ENCODE measurements at regions of chr17 and their contacts with region 1.

Region 1: DNA sequence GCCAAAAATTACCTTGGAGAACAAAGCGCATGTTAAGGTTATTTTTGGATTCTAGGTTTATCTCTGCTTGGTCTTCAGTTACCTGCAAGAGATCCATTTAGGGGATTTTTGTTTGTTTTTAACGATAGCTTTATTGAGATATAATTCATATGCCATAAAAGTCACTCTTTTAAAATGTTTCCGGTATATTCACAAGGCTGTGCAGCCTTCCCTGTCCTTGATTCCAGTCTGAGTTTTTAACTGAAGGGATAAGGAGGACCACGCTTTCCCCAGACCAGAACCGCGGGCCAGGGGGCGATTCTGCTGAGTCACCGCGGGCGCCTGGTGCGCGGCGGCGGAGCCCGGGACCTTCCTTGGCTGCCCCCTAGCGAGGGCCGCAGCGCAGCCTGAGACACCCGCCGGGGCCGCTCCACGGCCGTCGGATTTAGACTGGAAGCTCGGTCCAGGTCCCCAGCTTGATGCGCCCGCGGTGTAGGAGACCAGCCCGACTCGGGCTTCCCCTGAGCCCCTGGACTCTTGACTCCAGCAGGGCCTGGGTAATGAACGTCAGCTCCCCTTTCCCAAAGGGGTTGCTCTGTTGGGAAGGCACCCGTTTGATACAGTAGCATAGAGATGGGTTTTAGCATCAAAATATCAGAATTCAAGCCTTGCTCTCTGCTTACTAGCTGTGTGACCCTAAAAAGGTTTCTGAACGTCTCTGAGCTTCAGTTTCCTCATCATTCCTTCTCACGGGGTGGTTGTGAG is 50.0 kb upstream of the STH start:
- DNase-seq: peak; percentile 79
- H3K4me3 Mint-ChIP-seq: peak overlapping the region; percentile 64
- H3K27ac Mint-ChIP-seq: no peak overlapping the region
- H3K4me1 Mint-ChIP-seq: peaks cover 11% of the 10 kb centered on the region
- H3K27me3 Mint-ChIP-seq: peaks cover 14% of the 10 kb centered on the region

Region 2: GRCh38 chr17:45852535-45853297 is 96.3 kb before region 1 on chr17:
- CTCF ChIA-PET with region 1: interaction called, 15 read pairs
- POLR2A ChIA-PET with region 1: no interaction called
- intact Hi-C with region 1: no loop called
- DNase-seq: peak; percentile 65
- H3K4me3 Mint-ChIP-seq: no peak overlapping the region
- H3K27ac Mint-ChIP-seq: no peak overlapping the region
- H3K4me1 Mint-ChIP-seq: no peaks in the 10 kb centered on the region
- H3K27me3 Mint-ChIP-seq: peaks cover 18% of the 10 kb centered on the region

Region 3: GRCh38 chr17:46020023-46020761 is 71.1 kb after region 1 on chr17:
- CTCF ChIA-PET with region 1: no interaction called
- POLR2A ChIA-PET with region 1: no interaction called
- intact Hi-C with region 1: no loop called
- DNase-seq: peak; percentile 72
- H3K4me3 Mint-ChIP-seq: peak overlapping the region; percentile 13
- H3K27ac Mint-ChIP-seq: peak overlapping the region; percentile 76
- H3K4me1 Mint-ChIP-seq: peaks cover 24% of the 10 kb centered on the region
- H3K27me3 Mint-ChIP-seq: no peaks in the 10 kb centered on the region

Measured in activated CD4-positive, alpha-beta memory T cell treated with anti-CD3 and anti-CD28 coated beads for 36 hours (primary cell).